Activated CD8-positive, alpha-beta T cell treated with anti-CD3 and anti-CD28 coated beads for 36 hours (primary cell): ENCODE measurements at regions of chr2 and their contacts with region 1.

Region 1: GRCh38 chr2:74250189-74250631 is 51.8 kb downstream of the MTHFD2 start:
- DNase-seq: peak; percentile 65
- ATAC-seq: peak; percentile 78
- H3K4me3 Mint-ChIP-seq: no peak overlapping the region
- H3K27ac Mint-ChIP-seq: no peak overlapping the region
- H3K4me1 Mint-ChIP-seq: no peaks in the 10 kb centered on the region
- H3K27me3 Mint-ChIP-seq: no peaks in the 10 kb centered on the region
- CTCF ChIP-seq: peak; percentile 89

Region 2: GRCh38 chr2:73759285-73759764 is 490.9 kb before region 1 on chr2:
- CTCF ChIA-PET with region 1: no interaction called
- POLR2A ChIA-PET with region 1: no interaction called
- intact Hi-C with region 1: no loop called
- DNase-seq: no peak
- ATAC-seq: no peak
- H3K4me3 Mint-ChIP-seq: no peak overlapping the region
- H3K27ac Mint-ChIP-seq: no peak overlapping the region
- H3K4me1 Mint-ChIP-seq: no peaks in the 10 kb centered on the region
- H3K27me3 Mint-ChIP-seq: no peaks in the 10 kb centered on the region
- CTCF ChIP-seq: no peak

Region 3: GRCh38 chr2:74226648-74227213 is 23.5 kb before region 1 on chr2:
- CTCF ChIA-PET with region 1: no interaction called
- POLR2A ChIA-PET with region 1: no interaction called
- intact Hi-C with region 1: no loop called
- DNase-seq: no peak
- ATAC-seq: no peak
- H3K4me3 Mint-ChIP-seq: no peak overlapping the region
- H3K27ac Mint-ChIP-seq: no peak overlapping the region
- H3K4me1 Mint-ChIP-seq: peaks cover 4% of the 10 kb centered on the region
- H3K27me3 Mint-ChIP-seq: no peaks in the 10 kb centered on the region
- CTCF ChIP-seq: no peak

Region 4: DNA sequence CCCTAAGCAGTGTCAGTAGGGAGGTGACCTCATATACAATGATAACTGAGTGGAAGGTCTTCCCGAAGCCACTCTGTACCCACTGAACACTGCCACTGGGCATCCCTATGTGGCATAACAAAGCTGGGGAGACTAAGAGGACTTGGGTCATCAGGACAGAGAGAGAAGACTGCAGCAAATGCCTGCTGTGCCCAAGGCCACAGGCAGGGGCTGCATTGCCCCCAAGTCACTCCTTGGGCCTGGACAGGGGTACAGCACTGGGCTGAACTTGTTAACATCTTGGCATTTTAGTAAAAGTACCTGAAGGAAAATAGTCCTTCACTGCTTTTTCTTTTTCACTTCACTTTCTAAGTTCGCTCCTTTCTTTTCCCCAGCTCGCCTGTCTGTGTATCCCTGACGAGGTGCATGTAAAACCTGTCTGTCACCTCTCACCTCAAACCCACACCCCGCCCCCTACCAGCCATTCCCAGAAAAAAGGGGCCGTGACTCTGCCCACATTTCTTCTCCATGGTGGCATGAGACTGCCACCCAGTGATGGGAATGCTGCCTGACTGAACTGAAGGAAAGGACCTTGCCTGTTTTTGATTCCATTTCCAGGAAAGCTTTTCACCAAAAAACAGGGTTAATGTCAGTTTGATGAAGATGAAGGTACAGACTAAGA is 11.1 kb after region 1 on chr2:
- CTCF ChIA-PET with region 1: interaction called, 16 read pairs
- POLR2A ChIA-PET with region 1: no interaction called
- intact Hi-C with region 1: no loop called
- DNase-seq: no peak
- ATAC-seq: no peak
- H3K4me3 Mint-ChIP-seq: no peak overlapping the region
- H3K27ac Mint-ChIP-seq: no peak overlapping the region
- H3K4me1 Mint-ChIP-seq: peaks cover 4% of the 10 kb centered on the region
- H3K27me3 Mint-ChIP-seq: no peaks in the 10 kb centered on the region
- CTCF ChIP-seq: no peak

Region 5: DNA sequence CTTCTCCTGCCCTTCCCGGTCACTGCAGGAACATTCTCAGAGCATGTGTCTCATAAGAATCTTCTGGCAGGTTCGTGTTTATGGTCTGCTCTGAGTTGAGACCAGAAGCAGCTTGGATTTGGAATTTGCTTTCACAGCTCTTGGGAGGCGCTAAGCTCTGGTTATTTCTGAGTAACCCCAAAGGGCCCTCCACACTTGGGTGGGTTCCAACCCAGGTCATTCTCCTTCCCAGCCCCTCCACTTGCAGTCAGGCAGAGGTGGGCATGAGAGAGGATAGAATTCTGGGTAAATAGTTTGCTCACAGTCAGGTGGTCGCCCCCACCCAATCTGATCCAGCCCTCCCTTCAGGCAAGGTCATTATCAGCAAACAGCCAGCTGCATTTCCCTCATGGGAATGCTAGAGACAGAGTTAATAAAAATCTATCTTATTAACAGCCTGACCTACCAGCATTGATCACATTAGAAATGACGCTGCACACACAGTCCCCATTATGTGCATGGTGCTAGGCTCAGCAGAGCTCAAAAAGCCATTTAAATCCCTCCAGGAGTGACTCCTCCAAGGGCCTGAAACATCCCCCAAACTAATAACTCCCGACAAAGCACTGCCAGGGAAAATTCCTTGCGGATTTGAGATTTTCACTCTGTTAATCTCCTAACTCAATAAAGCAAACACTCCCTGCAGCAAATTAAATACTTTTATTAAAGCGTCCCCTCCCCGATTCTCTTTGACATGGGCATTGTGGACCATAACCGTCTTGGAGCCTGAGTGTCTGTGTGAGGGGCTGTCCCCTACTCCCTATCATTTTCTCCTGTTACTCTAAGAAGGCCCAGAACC is 31.1 kb after region 1 on chr2:
- CTCF ChIA-PET with region 1: interaction called, 11 read pairs
- POLR2A ChIA-PET with region 1: no interaction called
- intact Hi-C with region 1: no loop called
- DNase-seq: no peak
- ATAC-seq: no peak
- H3K4me3 Mint-ChIP-seq: no peak overlapping the region
- H3K27ac Mint-ChIP-seq: no peak overlapping the region
- H3K4me1 Mint-ChIP-seq: no peaks in the 10 kb centered on the region
- H3K27me3 Mint-ChIP-seq: no peaks in the 10 kb centered on the region
- CTCF ChIP-seq: no peak

Region 6: DNA sequence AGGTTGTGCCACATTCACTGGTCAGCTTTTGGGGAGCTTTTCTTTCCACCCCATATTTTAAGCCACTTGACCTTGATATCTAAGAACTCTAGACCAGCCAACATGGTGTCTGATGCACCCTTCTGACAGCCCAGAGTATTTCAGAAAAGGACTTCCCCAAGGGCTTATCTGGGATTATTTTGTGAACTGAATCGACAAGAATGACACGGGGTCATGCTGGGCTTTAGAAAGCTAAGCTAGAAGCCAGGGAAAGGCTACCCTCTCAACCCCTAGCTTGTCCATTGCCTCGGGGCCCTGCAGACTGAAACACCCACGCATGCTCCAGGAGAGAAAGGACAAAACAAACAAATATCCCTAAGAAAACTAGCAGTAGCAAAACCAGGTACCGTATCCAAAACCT is 77.0 kb after region 1 on chr2:
- CTCF ChIA-PET with region 1: interaction called, 190 read pairs
- POLR2A ChIA-PET with region 1: no interaction called
- intact Hi-C with region 1: no loop called
- DNase-seq: no peak
- ATAC-seq: no peak
- H3K4me3 Mint-ChIP-seq: no peak overlapping the region
- H3K27ac Mint-ChIP-seq: no peak overlapping the region
- H3K4me1 Mint-ChIP-seq: no peaks in the 10 kb centered on the region
- H3K27me3 Mint-ChIP-seq: no peaks in the 10 kb centered on the region
- CTCF ChIP-seq: no peak